Left lung (tissue), 14 donors: ENCODE measurements at regions of chr20 and their contacts with region 1.

Region 1: GRCh38 chr20:47272893-47273590 is 83.5 kb downstream of the ZMYND8 start:
- DNase-seq: peak in 2 of 4 donors; percentile 41 to 74
- ATAC-seq: peak; percentile 87
- H3K4me3 ChIP-seq: no peak overlapping the region
- H3K27ac ChIP-seq: peak overlapping the region; percentile 69 to 77
- H3K4me1 ChIP-seq: peaks cover 15 to 38% of the 10 kb centered on the region in 2 donors
- H3K27me3 ChIP-seq: no peaks in the 10 kb centered on the region
- CTCF ChIP-seq: peak; percentile 74 to 77

Region 2: GRCh38 chr20:46998477-46999240 is 274.4 kb before region 1 on chr20:
- intact Hi-C with region 1: no loop called
- DNase-seq: peak in 1 of 4 donors; percentile 27
- ATAC-seq: no peak
- H3K4me3 ChIP-seq: no peak overlapping the region
- H3K27ac ChIP-seq: no peak overlapping the region
- H3K4me1 ChIP-seq: no peaks in the 10 kb centered on the region
- H3K27me3 ChIP-seq: peaks cover 0 to 11% of the 10 kb centered on the region in 2 donors
- CTCF ChIP-seq: no peak

Region 3: GRCh38 chr20:47379433-47380150 is 106.5 kb after region 1 on chr20:
- intact Hi-C with region 1: loop called (anchors 5 to 10 kb)
- DNase-seq: no peak
- ATAC-seq: no peak
- H3K4me3 ChIP-seq: no peak overlapping the region
- H3K27ac ChIP-seq: no peak overlapping the region
- H3K4me1 ChIP-seq: peaks cover 6 to 19% of the 10 kb centered on the region in 2 donors
- H3K27me3 ChIP-seq: no peaks in the 10 kb centered on the region
- CTCF ChIP-seq: no peak

Region 4: DNA sequence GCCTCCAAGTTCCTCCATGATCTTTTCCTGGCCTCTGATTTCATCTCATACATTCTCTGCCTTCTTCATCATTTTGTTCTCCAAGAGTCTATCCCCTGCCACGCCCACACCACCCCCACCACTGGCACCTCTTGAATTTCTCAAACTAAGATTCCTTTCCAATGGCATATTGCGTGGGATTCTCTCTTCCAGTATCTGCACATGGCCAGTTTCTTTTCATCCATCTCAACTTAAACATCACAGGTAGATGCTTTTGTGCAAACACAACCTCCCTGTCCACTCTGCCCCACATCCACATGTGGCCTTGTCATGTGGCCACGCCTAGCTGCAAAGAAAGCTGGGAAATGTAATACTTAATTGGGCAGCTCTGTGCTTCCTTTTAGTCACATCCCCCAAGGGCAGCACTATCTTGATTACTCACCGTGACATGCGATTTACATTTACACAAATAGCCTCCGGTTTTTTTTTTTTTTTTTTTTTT is 116.9 kb after region 1 on chr20:
- intact Hi-C with region 1: loop called in 1 of 2 experiments (anchors 10 kb)
- DNase-seq: no peak
- ATAC-seq: no peak
- H3K4me3 ChIP-seq: no peak overlapping the region
- H3K27ac ChIP-seq: no peak overlapping the region
- H3K4me1 ChIP-seq: peaks cover 0 to 6% of the 10 kb centered on the region in 2 donors
- H3K27me3 ChIP-seq: no peaks in the 10 kb centered on the region
- CTCF ChIP-seq: no peak

Region 5: GRCh38 chr20:47740862-47741184 is 467.8 kb after region 1 on chr20:
- intact Hi-C with region 1: no loop called
- DNase-seq: peak in 2 of 4 donors; percentile 79 to 83
- ATAC-seq: peak; percentile 74
- H3K4me3 ChIP-seq: no peak overlapping the region
- H3K27ac ChIP-seq: no peak overlapping the region
- H3K4me1 ChIP-seq: peaks cover 0 to 22% of the 10 kb centered on the region in 2 donors
- H3K27me3 ChIP-seq: peaks cover 0 to 31% of the 10 kb centered on the region in 2 donors
- CTCF ChIP-seq: no peak